Esophagus squamous epithelium (tissue), 5 donors: ENCODE measurements at regions of chr13 and their contacts with region 1.

Region 1: DNA sequence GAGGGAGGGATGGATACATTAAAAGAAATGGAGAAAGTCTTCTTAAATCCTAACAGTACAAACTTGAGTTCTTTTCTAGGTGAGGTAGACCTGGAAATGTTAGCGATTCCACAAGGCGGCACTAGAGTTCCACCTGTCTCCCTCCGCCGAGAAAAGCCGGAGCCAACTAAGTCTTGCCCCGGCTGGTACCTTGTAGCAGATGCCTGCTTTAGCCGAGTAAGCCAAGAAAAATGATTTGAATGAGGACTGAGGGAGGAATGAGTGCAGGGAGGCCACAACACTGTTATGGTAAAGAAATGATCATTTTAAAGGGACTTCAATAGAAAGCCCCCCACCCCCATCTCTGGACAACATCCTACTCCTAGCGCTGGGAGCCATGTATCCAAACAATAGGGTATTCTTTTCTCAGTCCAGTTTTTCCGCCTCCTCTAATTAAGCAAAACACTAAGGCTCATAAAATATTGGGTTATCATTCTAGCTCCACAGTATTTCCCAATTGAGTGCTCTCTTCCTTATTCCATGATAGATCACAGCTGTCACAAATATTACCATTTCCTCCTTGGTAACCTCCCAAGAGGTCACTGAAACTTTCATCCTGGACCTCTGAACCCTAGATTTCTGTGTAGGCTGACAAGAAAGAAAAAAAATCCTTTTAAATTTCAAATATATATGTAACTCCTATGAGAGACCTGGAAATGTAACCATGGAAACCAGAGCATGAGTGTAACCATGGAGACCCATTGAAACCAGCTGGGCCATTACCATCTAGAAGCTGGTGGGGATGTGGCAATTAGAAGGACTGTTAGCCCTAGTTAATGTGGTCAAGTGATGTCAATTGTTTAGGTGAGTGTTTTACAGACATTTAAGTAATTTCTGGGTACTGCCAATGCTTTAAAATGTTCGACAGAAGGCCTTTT is 58.3 kb downstream of the GPALPP1 start:
- DNase-seq: no peak
- H3K4me3 ChIP-seq: peak overlapping the region; percentile 22 to 48 (median 44)
- H3K27ac ChIP-seq: no peak overlapping the region
- H3K4me1 ChIP-seq: peaks cover 0 to 20% (median 0%) of the 10 kb centered on the region in 3 donors
- H3K27me3 ChIP-seq: no peaks in the 10 kb centered on the region
- CTCF ChIP-seq: peak; percentile 72 to 96 (median 90)
- POLR2A ChIP-seq: no peak

Region 2: DNA sequence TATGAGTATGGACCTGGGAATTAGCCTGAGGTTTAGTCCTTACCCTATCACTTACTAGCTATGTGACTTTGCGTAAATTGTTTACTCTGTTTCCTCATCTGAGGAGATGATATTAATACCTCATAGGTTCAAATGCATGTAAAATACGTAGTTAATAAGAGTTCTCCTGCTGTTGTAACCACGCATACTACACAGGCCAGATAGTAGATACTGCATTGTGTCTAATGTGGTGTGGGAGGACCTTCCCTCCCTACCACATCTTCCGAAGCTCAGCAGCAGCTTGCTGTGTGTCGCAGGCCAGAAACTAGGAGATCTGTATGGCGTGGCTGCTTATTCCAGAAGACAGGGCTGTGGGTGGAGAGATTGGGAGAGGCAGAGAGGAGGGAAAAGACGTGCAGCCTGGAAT is 95.7 kb after region 1 on chr13:
- intact Hi-C with region 1: no loop called
- DNase-seq: no peak
- H3K4me3 ChIP-seq: no peak overlapping the region
- H3K27ac ChIP-seq: peak overlapping the region in 2 of 4 donors; percentile 3 to 41
- H3K4me1 ChIP-seq: peaks cover 0 to 18% (median 4%) of the 10 kb centered on the region in 3 donors
- H3K27me3 ChIP-seq: no peaks in the 10 kb centered on the region
- CTCF ChIP-seq: no peak
- POLR2A ChIP-seq: no peak

Region 3: GRCh38 chr13:45280751-45281634 is 233.3 kb after region 1 on chr13:
- intact Hi-C with region 1: loop called (anchors 2 kb)
- DNase-seq: no peak
- H3K4me3 ChIP-seq: no peak overlapping the region
- H3K27ac ChIP-seq: no peak overlapping the region
- H3K4me1 ChIP-seq: peaks cover 0 to 5% (median 0%) of the 10 kb centered on the region in 3 donors
- H3K27me3 ChIP-seq: no peaks in the 10 kb centered on the region
- CTCF ChIP-seq: peak in 5 of 6 experiments; percentile 60 to 86 (median 70)
- POLR2A ChIP-seq: no peak